ENCODE measurements at regions of chr10 and their contacts with region 1.

Region 1: DNA sequence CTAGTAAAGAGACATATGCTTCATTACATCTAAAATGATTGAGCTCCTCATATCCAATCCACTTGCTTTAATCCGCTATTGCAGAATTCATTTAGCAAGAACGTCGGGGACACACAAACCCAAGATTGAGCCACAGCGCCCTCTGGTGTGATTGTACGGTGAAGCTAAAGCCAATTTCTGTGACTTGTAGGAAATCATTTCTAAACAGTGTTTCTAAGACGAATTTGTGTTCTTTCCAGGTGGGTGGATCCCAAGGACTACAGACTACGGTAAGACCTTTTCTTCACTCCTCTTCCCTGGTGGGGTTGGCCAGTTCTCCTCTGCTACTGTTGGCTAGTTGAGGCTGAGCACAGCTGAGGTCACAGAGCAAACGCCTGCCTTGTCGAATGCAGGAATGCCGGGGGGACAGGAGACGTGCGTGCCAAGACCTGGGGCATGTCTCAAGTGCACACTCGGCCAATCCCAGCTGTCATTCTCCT is 5.2 kb downstream of the DMBT1 start:
- DNase-seq: peak; percentile 16 to 63 (median 23)
- ATAC-seq: peak; percentile 68; the same call in 2 of the 3 replicates
- H3K4me3 ChIP-seq: no peak overlapping the region
- H3K27ac ChIP-seq: no peak overlapping the region
- H3K4me1 ChIP-seq: no peaks in the 10 kb centered on the region
- H3K27me3 ChIP-seq: no peaks in the 10 kb centered on the region
- CTCF ChIP-seq: peak; percentile 54 to 71 (median 65); a peak in 5 of 6 replicates
- EP300 ChIP-seq: no peak
- POLR2A ChIP-seq: no peak
- RAD21 ChIP-seq: peak; percentile 31 to 71; a peak in 3 of 4 replicates

Region 2: DNA sequence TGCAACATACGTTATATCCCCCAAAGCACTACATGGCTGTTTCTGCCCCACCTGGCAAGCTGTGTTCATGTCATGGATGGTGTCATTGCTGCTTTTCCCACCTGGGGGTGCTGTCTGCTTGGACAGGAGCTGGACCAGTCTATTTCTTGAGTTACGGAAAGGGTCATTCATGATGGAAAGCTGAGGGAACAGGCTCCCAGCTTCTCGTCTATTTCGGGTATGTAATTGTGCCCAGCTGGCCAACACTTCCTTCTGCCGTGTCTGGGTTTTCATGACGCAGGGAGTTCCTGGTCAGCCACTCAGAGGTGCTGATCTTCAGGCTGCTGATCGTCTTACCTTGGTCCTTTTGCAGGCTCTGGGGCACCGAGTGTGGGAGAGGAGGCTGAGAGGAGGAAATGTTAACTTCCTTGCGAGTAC is 286.0 kb before region 1 on chr10:
- CTCF ChIA-PET with region 1: interaction called, 3 read pairs
- POLR2A ChIA-PET with region 1: no interaction called
- in situ Hi-C with region 1: no loop called
- intact Hi-C with region 1: loop called (anchors 5 kb)
- DNase-seq: peak; percentile 25 to 42 (median 36)
- ATAC-seq: peak; percentile 73; the same call in 2 of the 3 replicates
- H3K4me3 ChIP-seq: no peak overlapping the region
- H3K27ac ChIP-seq: no peak overlapping the region
- H3K4me1 ChIP-seq: no peaks in the 10 kb centered on the region
- H3K27me3 ChIP-seq: no peaks in the 10 kb centered on the region; a peak in 1 of 5 replicates
- CTCF ChIP-seq: peak; percentile 57 to 65 (median 62)
- EP300 ChIP-seq: no peak
- POLR2A ChIP-seq: no peak
- RAD21 ChIP-seq: peak in 1 of 2 experiments; percentile 64; a peak in 2 of 4 replicates

Region 3: GRCh38 chr10:122298598-122299301 is 267.0 kb before region 1 on chr10:
- CTCF ChIA-PET with region 1: interaction called, 4 read pairs
- POLR2A ChIA-PET with region 1: no interaction called
- in situ Hi-C with region 1: no loop called
- intact Hi-C with region 1: loop called (anchors 5 kb)
- DNase-seq: peak; percentile 51 to 56 (median 54)
- ATAC-seq: peak; percentile 92
- H3K4me3 ChIP-seq: no peak overlapping the region
- H3K27ac ChIP-seq: no peak overlapping the region
- H3K4me1 ChIP-seq: no peaks in the 10 kb centered on the region
- H3K27me3 ChIP-seq: no peaks in the 10 kb centered on the region; a peak in 1 of 5 replicates
- CTCF ChIP-seq: peak; percentile 67 to 77 (median 77)
- EP300 ChIP-seq: no peak
- POLR2A ChIP-seq: no peak
- RAD21 ChIP-seq: peak; percentile 59 to 82

Region 4: GRCh38 chr10:122342293-122343134 is 223.3 kb before region 1 on chr10:
- CTCF ChIA-PET with region 1: interaction called, 8 read pairs
- POLR2A ChIA-PET with region 1: interaction called, 3 read pairs
- in situ Hi-C with region 1: no loop called
- intact Hi-C with region 1: loop called (anchors 10 kb)
- DNase-seq: peak; percentile 31 to 47 (median 45)
- ATAC-seq: peak; percentile 58; the same call in 2 of the 3 replicates
- H3K4me3 ChIP-seq: no peak overlapping the region
- H3K27ac ChIP-seq: no peak overlapping the region
- H3K4me1 ChIP-seq: no peaks in the 10 kb centered on the region
- H3K27me3 ChIP-seq: peaks cover 0 to 9% of the 10 kb centered on the region in 2 experiments; a peak in 4 of 5 replicates
- CTCF ChIP-seq: peak; percentile 55 to 63 (median 60)
- EP300 ChIP-seq: no peak
- POLR2A ChIP-seq: no peak
- RAD21 ChIP-seq: peak in 1 of 2 experiments; percentile 59; a peak in 2 of 4 replicates

Region 5: DNA sequence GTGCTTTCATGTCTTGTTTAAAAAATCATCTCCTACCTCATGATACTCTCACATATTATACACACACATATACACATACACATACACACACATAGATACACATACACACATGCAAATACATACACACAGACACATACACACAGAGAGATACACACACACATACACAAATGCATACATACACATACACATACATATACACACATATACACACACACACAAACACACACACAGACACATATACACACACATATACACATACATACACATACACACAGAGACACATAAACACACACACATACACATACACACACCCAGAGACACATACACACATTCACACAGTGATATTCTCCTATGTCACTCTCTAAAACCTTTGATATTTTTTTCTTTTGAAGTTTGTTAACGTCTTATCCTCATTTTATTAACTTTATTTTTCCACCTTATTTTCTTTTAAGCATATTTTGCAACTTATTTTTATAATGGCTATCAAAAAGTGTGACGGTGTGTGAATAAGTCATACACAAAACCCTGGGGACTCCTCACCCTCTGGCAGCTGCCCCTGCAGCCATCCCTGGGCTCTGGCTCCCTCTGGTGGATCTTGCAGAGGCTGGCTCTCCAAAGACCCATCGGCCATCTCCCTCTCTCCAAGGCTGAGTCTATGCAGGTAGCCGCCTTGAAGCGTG is 137.8 kb after region 1 on chr10:
- CTCF ChIA-PET with region 1: no interaction called
- POLR2A ChIA-PET with region 1: no interaction called
- in situ Hi-C with region 1: no loop called
- intact Hi-C with region 1: loop called (anchors 2 kb)
- DNase-seq: peak; percentile 63 to 71 (median 68)
- ATAC-seq: peak; percentile 96
- H3K4me3 ChIP-seq: no peak overlapping the region
- H3K27ac ChIP-seq: no peak overlapping the region
- H3K4me1 ChIP-seq: no peaks in the 10 kb centered on the region
- H3K27me3 ChIP-seq: peaks cover 0 to 3% of the 10 kb centered on the region in 2 experiments; a peak in 1 of 5 replicates
- CTCF ChIP-seq: peak; percentile 70 to 76 (median 74)
- EP300 ChIP-seq: no peak
- POLR2A ChIP-seq: no peak
- RAD21 ChIP-seq: peak; percentile 56 to 82